ENCODE measurements at regions of chr1 and their contacts with region 1.

Region 1: DNA sequence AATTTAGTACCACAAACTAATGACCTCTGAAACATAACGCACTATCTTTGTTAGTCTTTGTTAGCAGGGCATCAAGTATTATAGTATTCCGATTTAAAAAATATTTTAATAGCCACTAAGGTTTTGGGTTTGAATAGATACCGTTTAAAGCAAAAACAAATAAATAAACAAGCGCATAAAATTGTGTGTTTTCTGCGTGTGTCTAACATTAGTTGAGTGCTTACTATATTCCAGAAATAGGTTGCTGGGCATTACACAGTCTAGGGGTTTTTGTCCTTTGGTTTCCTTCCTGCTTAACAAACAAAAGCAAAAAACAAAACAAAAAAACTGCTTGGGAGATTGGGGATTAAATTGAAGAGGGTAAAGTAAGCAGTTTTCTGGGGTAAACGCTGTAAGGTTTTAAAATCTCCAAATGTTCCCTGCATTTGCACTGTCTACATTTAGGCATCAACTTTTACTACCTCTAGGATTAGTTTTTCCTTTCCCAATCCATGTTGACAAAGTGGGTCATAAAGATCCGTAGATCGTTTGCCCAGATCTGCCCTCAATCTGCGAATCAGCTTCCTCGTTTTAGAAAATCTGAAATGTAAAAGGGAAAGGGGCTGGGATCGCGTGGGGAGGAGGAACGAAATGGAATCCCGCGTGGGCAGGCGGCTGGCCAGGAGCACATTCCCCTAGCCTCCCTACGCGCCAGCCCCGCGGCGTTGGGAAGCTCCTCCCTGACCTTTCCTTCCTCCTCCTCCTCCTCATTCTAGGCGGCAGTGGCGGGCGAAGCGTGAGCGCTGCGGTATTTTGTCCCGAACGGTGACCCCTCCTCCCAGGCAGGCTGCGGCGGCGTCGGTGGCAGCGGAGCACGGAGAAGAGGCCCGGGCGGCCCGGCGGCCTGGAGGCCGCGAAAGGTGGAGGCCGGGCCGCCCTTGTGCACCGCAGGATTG is at the start of gene KCTD3:
- DNase-seq: peak; percentile 81 to 84
- H3K4me3 ChIP-seq: peak within 1 kb of the TSS; percentile 70
- H3K4me3 Mint-ChIP-seq: peak within 1 kb of the TSS; percentile 99
- H3K27ac Mint-ChIP-seq: peak within 1 kb of the TSS; percentile 99
- H3K4me1 ChIP-seq: peaks cover 24% of the 10 kb centered on the region
- H3K4me1 Mint-ChIP-seq: peaks cover 12% of the 10 kb centered on the region
- H3K27me3 ChIP-seq: no peaks in the 10 kb centered on the region
- H3K27me3 Mint-ChIP-seq: no peaks in the 10 kb centered on the region
- CTCF ChIP-seq: no peak
- total RNA-seq, gene KCTD3: 49.4 and 50.7 TPM in 2 replicates

Region 2: GRCh38 chr1:215517441-215517891 is 49.4 kb before region 1 on chr1:
- CTCF ChIA-PET with region 1: no interaction called
- POLR2A ChIA-PET with region 1: no interaction called
- intact Hi-C with region 1: no loop called
- DNase-seq: peak in 1 of 2 experiments; percentile 2
- H3K4me3 ChIP-seq: no peak overlapping the region
- H3K4me3 Mint-ChIP-seq: no peak overlapping the region
- H3K27ac Mint-ChIP-seq: no peak overlapping the region
- H3K4me1 ChIP-seq: no peaks in the 10 kb centered on the region
- H3K4me1 Mint-ChIP-seq: no peaks in the 10 kb centered on the region
- H3K27me3 ChIP-seq: no peaks in the 10 kb centered on the region
- H3K27me3 Mint-ChIP-seq: no peaks in the 10 kb centered on the region
- CTCF ChIP-seq: peak in 1 of 2 experiments; percentile 33

Region 3: GRCh38 chr1:215583185-215583749 is 16.4 kb after region 1 on chr1:
- CTCF ChIA-PET with region 1: no interaction called
- POLR2A ChIA-PET with region 1: no interaction called
- intact Hi-C with region 1: loop called (anchors 1 kb)
- DNase-seq: peak; percentile 79 to 83
- H3K4me3 ChIP-seq: peak overlapping the region; percentile 25
- H3K4me3 Mint-ChIP-seq: peak overlapping the region; percentile 67
- H3K27ac Mint-ChIP-seq: peak overlapping the region; percentile 88
- H3K4me1 ChIP-seq: peaks cover 24% of the 10 kb centered on the region
- H3K4me1 Mint-ChIP-seq: peaks cover 22% of the 10 kb centered on the region
- H3K27me3 ChIP-seq: no peaks in the 10 kb centered on the region
- H3K27me3 Mint-ChIP-seq: no peaks in the 10 kb centered on the region
- CTCF ChIP-seq: no peak

Region 4: DNA sequence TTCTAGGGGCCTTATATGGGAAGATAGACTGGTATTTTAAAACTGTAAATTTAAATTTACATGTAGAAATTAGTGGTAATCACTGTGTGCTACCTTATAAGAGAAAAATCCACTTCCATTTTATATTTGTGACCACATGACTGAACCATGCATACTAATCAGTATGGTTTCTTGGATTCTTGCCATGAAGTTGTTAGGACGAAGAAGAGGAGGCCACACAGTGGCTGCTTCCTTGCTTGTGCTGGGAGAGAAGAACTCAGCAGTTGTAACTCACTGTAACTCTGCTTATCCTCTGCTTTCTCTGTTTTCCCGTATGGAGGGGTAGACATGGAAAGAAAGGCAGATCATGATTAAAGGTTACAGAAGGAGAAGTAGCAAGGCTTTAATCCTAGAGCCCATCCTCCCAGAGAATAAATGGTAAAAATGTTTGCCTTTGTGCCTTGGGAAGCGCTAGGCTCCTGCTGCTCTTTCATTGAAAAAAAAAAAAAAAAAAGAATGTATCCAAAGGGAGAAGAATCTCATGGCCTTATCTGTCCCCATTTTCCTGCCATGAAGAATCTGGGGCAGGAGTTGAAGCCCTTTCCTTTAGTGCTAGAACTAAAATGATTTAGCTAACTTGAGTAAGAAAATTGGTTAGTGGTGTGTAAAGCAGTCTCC is 32.7 kb after region 1 on chr1:
- CTCF ChIA-PET with region 1: no interaction called
- POLR2A ChIA-PET with region 1: no interaction called
- intact Hi-C with region 1: loop called (anchors 2 kb)
- DNase-seq: no peak
- H3K4me3 ChIP-seq: no peak overlapping the region
- H3K4me3 Mint-ChIP-seq: no peak overlapping the region
- H3K27ac Mint-ChIP-seq: no peak overlapping the region
- H3K4me1 ChIP-seq: peaks cover 36% of the 10 kb centered on the region
- H3K4me1 Mint-ChIP-seq: peaks cover 44% of the 10 kb centered on the region
- H3K27me3 ChIP-seq: no peaks in the 10 kb centered on the region
- H3K27me3 Mint-ChIP-seq: no peaks in the 10 kb centered on the region
- CTCF ChIP-seq: no peak

Region 5: GRCh38 chr1:215606564-215607168 is 39.8 kb after region 1 on chr1:
- CTCF ChIA-PET with region 1: interaction called, 7 read pairs
- POLR2A ChIA-PET with region 1: no interaction called
- intact Hi-C with region 1: loop called (anchors 1 kb)
- DNase-seq: no peak
- H3K4me3 ChIP-seq: no peak overlapping the region
- H3K4me3 Mint-ChIP-seq: peak overlapping the region; percentile 44
- H3K27ac Mint-ChIP-seq: peak overlapping the region; percentile 68
- H3K4me1 ChIP-seq: peaks cover 38% of the 10 kb centered on the region
- H3K4me1 Mint-ChIP-seq: peaks cover 32% of the 10 kb centered on the region
- H3K27me3 ChIP-seq: no peaks in the 10 kb centered on the region
- H3K27me3 Mint-ChIP-seq: no peaks in the 10 kb centered on the region
- CTCF ChIP-seq: peak in 1 of 2 experiments; percentile 53